ENCODE measurements at regions of chr20 and their contacts with region 1.

Region 1: DNA sequence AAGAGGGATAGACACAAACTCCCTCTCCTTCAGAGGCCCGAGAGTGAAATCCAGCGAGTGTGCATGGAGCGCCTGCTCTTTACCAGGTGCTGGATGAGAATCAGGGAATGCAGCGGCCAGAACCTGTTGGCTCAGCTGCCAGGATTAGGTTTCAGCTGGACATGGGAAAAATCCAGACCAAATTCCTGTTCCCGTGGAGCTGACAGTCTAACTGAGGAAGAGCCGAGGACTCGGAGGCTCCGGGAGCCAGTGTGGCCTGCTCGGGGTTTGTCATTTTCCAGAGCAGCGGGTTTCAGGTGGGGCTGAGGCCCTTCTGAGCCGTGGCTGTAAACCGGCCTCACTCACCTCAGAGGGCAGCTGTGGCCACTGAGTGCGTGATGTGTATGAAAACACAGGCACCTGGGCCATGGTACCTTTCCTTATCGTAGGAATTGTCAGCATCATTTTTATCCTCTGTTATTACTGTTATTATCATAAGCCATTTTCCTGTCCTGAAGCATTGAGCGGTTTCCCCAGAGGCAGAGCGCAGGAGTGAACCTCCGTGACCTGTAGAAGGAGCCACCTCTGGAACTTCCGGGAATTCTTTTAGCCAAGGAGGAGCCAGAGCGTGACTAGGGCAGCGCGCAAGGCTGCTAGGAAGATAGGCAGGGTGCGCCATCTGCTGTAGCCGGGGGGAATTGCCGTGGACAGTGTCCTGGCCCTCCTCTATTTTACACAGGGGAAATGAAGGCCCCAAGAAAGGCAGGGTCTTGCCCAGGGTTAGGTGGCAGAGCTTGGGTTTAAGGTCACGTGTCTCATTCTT is 27.3 kb downstream of the PKIG start:
- DNase-seq: peak; percentile 79
- ATAC-seq: peak; percentile 95
- H3K4me3 Mint-ChIP-seq: peak overlapping the region; percentile 70
- H3K27ac Mint-ChIP-seq: peak overlapping the region; percentile 93
- H3K4me1 Mint-ChIP-seq: peaks cover 62% of the 10 kb centered on the region
- H3K27me3 Mint-ChIP-seq: no peaks in the 10 kb centered on the region
- CTCF ChIP-seq: peak; percentile 92

Region 2: GRCh38 chr20:44388466-44389023 is 221.2 kb before region 1 on chr20:
- CTCF ChIA-PET with region 1: interaction called, 6 read pairs
- POLR2A ChIA-PET with region 1: no interaction called
- intact Hi-C with region 1: loop called (anchors 1 kb)
- DNase-seq: peak; percentile 35
- ATAC-seq: peak; percentile 79
- H3K4me3 Mint-ChIP-seq: no peak overlapping the region
- H3K27ac Mint-ChIP-seq: no peak overlapping the region
- H3K4me1 Mint-ChIP-seq: peaks cover 5% of the 10 kb centered on the region
- H3K27me3 Mint-ChIP-seq: peaks cover 24% of the 10 kb centered on the region
- CTCF ChIP-seq: no peak

Region 3: DNA sequence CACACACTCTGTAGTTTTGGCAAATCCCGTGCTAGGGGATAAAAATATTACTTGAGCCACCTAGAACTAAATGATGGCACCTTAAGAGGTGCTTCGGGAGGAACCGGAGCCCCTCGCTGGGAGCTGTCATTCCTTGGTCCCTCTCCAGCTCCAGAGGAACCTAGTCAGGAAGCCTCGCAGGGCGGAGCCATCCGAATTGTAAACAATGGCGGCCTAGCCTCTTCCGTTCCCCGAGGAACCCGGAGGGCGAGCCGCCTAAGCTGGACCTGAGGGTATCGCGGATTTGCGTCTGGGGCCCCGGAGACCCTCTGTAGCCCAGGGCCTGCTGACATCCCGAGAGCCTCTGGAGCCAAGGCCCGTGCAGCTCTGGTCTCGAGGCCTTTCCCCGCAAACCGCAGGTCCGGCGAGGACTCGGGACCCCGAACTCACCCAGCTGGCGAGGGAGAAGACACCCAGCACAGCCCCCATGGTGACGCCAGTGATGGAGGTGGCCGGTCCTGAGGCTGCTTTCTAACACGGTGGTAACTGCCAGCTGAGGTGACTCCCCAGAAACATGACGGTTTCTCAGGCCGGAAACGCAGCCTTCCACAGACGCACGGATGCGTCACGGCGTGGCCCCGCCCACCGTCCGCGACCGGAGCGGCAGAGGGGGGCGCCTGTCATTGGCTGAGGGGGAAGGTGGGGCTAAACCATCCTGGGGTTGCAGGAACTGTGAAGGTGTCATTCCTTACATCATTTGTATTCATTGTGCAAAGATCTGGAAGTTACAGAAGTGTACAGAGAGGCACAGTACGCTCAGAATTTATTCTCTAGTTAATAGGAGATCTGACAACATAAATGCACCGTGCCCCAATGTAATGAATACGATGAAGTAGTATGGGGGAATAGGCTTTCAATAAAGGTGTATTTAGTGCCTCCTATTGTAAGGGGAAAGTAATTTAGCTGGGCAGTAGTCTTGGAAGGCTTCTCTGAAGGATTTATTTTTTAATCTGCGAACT is 87.9 kb before region 1 on chr20 and contains the start of gene SERINC3:
- CTCF ChIA-PET with region 1: interaction called, 9 read pairs
- POLR2A ChIA-PET with region 1: interaction called, 8 read pairs
- intact Hi-C with region 1: loop called (anchors 1 kb)
- DNase-seq: peak; percentile 97
- ATAC-seq: peak; percentile 98
- H3K4me3 Mint-ChIP-seq: peak within 1 kb of the TSS; percentile 89
- H3K27ac Mint-ChIP-seq: peak within 1 kb of the TSS; percentile 83
- H3K4me1 Mint-ChIP-seq: peaks cover 44% of the 10 kb centered on the region
- H3K27me3 Mint-ChIP-seq: no peaks in the 10 kb centered on the region
- CTCF ChIP-seq: no peak
- total RNA-seq, gene SERINC3: 38.1 and 41.4 TPM in 2 replicates

Region 4: GRCh38 chr20:44576297-44576696 is 33.4 kb before region 1 on chr20:
- CTCF ChIA-PET with region 1: interaction called, 147 read pairs
- POLR2A ChIA-PET with region 1: interaction called, 32 read pairs
- intact Hi-C with region 1: loop called (anchors 1 kb)
- DNase-seq: no peak
- ATAC-seq: peak; percentile 80
- H3K4me3 Mint-ChIP-seq: peak overlapping the region; percentile 72
- H3K27ac Mint-ChIP-seq: peak overlapping the region; percentile 89
- H3K4me1 Mint-ChIP-seq: peaks cover 44% of the 10 kb centered on the region
- H3K27me3 Mint-ChIP-seq: no peaks in the 10 kb centered on the region
- CTCF ChIP-seq: no peak

Region 5: DNA sequence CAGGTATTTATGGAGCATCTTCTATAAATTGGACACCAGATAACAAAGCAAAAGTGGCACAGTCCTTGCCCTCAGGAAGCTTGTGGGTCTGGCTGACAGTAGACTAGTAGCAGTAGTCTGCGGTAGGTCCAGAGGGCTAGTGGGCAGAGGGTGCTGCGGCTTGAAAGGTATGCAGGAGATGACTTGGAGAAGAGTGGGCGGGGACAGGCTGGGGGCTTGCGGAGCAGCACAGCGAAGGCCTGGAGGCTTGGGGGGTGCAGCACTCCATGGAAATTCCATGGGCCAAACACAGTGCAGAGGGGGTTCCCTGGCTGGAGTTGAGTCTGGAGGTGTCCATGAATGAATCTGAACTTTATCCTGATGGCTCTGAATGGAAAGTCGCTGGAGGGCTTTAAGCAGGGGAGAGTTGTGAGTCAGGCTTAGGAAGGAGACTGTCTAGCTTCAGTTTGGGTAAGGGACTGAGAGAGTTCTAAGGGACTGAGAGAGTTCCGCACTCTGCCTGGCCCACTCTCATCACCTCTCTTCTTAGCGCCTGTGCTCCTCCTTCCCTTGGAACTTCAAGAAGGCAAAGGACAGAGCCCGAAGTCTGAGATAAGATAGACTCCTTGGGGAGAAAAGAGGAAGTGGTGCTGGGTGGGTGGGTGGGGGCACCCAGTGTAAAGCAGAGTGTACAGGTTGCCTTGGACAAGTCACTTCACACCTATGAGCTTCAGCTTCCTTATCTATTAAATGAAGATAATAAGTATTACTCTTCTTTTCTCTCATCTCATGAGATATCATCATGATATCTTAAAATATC is 18.5 kb before region 1 on chr20:
- CTCF ChIA-PET with region 1: interaction called, 36 read pairs
- POLR2A ChIA-PET with region 1: interaction called, 154 read pairs
- intact Hi-C with region 1: no loop called
- DNase-seq: no peak
- ATAC-seq: no peak
- H3K4me3 Mint-ChIP-seq: peak overlapping the region; percentile 52
- H3K27ac Mint-ChIP-seq: peak overlapping the region; percentile 89
- H3K4me1 Mint-ChIP-seq: peaks cover 97% of the 10 kb centered on the region
- H3K27me3 Mint-ChIP-seq: no peaks in the 10 kb centered on the region
- CTCF ChIP-seq: no peak

Region 6: DNA sequence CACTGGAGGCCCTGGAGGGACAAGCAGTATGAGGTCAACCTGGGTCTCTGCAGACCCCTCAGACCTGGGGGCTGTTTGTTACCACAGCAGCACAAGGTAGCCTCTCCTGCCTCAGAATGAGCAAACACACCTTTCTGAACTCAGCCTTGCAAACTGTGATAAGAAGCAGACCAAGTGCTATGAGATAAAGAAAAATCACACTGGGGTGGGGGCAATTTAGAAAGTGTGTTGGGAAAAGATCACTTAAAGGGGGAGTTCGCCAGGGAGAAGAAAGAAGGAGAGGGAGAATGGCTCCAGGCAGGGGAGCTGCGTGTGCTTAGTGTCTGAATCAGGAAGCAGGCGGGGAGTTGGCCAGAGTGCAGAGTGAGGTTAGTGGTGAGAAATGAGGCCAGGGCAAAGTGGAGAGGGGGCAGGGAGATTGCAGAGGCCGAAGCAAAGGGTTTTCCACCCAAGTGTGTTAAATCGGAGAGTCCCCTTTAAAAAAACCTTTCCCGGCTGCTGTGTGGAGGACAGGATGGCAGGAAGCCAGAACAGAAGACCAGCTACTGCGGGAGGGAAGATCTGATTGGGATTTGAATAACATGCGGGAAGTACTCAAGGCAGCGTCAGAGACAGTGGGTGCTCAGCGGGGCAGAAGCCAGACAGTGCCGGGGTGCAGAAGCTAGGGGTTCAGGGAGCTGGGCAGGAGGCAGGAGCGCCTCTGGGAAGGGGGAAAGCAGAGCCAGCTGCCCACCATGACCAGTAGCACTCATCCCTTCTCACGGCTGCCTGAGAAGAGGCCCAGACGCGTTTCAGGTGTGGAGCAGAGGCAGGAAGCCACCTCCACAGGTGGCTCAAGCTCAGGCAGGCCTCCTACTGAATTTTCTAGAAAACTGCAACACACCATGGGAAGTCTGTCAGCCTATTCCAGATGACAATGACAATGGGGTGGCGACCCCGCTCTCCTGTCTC is 32.8 kb after region 1 on chr20:
- CTCF ChIA-PET with region 1: interaction called, 6 read pairs
- POLR2A ChIA-PET with region 1: interaction called, 17 read pairs
- intact Hi-C with region 1: no loop called
- DNase-seq: no peak
- ATAC-seq: peak; percentile 15
- H3K4me3 Mint-ChIP-seq: peak overlapping the region; percentile 42
- H3K27ac Mint-ChIP-seq: peak overlapping the region; percentile 73
- H3K4me1 Mint-ChIP-seq: peaks cover 69% of the 10 kb centered on the region
- H3K27me3 Mint-ChIP-seq: no peaks in the 10 kb centered on the region
- CTCF ChIP-seq: no peak

Measured in activated B cell treated with CpG ODN at 0.5 μM for 24 hours (primary cell).